ENCODE measurements at regions of chr2 and their contacts with region 1.

Region 1: GRCh38 chr2:151289369-151290088 is at the start of gene NMI:
- DNase-seq: peak; percentile 68
- ATAC-seq: peak; percentile 74
- H3K4me3 Mint-ChIP-seq: peak within 1 kb of the TSS; percentile 91
- H3K27ac Mint-ChIP-seq: peak within 1 kb of the TSS; percentile 97
- H3K4me1 Mint-ChIP-seq: peaks cover 45% of the 10 kb centered on the region
- H3K27me3 Mint-ChIP-seq: no peaks in the 10 kb centered on the region
- total RNA-seq, gene NMI: 62.2 to 70.2 TPM

Region 2: GRCh38 chr2:151261231-151261976 is 28.1 kb before region 1 on chr2 and contains the start of gene RBM43:
- CTCF ChIA-PET with region 1: interaction called, 5 read pairs
- POLR2A ChIA-PET with region 1: interaction called, 29 read pairs
- DNase-seq: peak; percentile 93
- ATAC-seq: peak; percentile 96
- H3K4me3 Mint-ChIP-seq: peak within 1 kb of the TSS; percentile 83
- H3K27ac Mint-ChIP-seq: peak within 1 kb of the TSS; percentile 94
- H3K4me1 Mint-ChIP-seq: peaks cover 28% of the 10 kb centered on the region
- H3K27me3 Mint-ChIP-seq: no peaks in the 10 kb centered on the region
- total RNA-seq, gene RBM43: 4.4 to 4.9 TPM

Region 3: GRCh38 chr2:151409601-151410484 is 120.3 kb after region 1 on chr2 and contains the start of gene RIF1:
- CTCF ChIA-PET with region 1: interaction called, 3 read pairs
- POLR2A ChIA-PET with region 1: interaction called, 12 read pairs
- DNase-seq: peak; percentile 82
- ATAC-seq: peak; percentile 95
- H3K4me3 Mint-ChIP-seq: peak within 1 kb of the TSS; percentile 97
- H3K27ac Mint-ChIP-seq: peak within 1 kb of the TSS; percentile 98
- H3K4me1 Mint-ChIP-seq: peaks cover 33% of the 10 kb centered on the region
- H3K27me3 Mint-ChIP-seq: peaks cover 6% of the 10 kb centered on the region
- total RNA-seq, gene RIF1: 55.9 to 56.6 TPM

Region 4: DNA sequence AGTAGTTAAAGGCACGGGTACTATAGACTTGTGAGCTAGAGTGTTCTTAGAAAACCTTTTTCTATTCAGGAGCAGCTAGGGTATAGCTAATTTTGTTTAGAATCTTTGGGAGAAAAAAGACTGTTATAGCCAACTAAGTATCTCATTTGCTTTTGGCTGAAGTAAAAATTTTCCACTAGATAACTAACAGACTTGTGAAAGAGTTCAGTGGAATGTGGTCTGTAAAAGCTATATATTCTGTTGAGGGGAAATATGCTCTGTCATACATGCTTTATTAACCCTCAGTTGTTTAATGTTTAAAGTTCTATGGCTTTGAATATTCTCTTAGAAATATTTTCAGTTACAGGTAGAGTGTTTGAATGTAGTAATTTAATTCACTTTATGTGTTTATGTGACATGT is 169.8 kb after region 1 on chr2:
- CTCF ChIA-PET with region 1: no interaction called
- POLR2A ChIA-PET with region 1: no interaction called
- DNase-seq: no peak
- ATAC-seq: no peak
- H3K4me3 Mint-ChIP-seq: no peak overlapping the region
- H3K27ac Mint-ChIP-seq: no peak overlapping the region
- H3K4me1 Mint-ChIP-seq: no peaks in the 10 kb centered on the region
- H3K27me3 Mint-ChIP-seq: no peaks in the 10 kb centered on the region